ENCODE measurements at regions of chr17 and their contacts with region 1.

Region 1: DNA sequence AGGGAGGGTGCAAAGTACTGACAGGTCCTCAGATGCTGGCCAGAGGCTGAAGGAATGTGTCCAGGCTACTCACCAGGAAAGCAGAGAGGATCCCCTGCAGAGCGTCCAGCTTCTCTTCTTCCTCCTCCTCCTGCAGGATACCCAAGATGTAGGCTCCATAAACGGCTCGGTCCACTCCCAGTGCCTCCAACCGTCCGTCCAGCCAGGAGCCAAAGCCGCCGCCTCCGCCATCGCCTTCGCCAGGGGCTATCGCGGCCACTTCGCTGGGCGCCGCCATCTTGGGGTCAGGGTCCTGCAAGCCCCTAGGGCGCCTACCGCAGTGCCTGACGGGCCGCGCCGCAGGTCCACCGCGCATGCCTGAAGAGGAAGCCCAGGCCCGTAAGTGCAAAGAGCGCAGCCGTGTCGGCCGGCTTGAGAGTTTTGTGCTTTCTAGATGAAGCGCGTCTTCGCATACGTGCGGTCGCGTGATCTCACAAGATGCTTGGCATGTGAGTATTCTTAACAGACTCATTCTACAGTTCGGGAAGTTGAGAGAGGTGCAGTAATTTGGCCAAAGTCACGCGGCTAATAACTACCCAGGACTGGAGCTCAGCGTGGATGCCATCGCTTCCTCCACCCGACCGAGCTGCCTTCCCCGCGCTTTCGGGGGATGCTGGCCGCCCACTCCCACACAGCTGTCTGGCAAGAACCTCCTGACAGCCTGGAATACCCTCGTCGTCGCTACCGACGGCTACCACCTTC is at the start of gene CCDC43:
- DNase-seq: peak; percentile 96 to 97
- ATAC-seq: peak; percentile 96 to 99
- H3K4me3 ChIP-seq: peak within 1 kb of the TSS; percentile 67
- H3K27ac ChIP-seq: peak within 1 kb of the TSS; percentile 80 to 92
- H3K4me1 ChIP-seq: peaks cover 21% of the 10 kb centered on the region
- CTCF ChIP-seq: no peak
- EP300 ChIP-seq: no peak
- POLR2A ChIP-seq: peak; percentile 98
- RAD21 ChIP-seq: no peak; a peak in 1 of 5 replicates
- polyA plus RNA-seq, gene CCDC43: 24.1 and 34.3 TPM in 2 replicates

Region 2: DNA sequence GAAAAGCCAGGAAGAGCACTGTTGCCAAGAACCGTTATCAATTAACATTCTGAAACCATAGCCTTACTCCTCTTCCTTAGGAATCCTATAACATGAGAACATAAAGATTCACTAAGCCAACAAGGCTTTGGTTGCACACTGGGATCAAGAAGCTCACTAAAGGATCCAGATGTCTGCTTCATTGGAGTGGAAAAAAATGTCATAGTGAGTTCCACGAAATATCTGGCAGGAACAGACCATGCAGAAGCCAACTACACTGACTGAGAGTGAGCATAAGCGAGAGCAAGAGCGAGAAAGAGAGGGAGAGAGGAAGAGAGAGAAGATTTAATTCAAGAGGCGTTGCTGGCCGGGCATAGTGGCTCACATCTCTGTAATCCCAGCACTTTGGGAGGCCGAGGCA is 46.8 kb before region 1 on chr17:
- CTCF ChIA-PET with region 1: no interaction called
- POLR2A ChIA-PET with region 1: no interaction called
- DNase-seq: no peak
- ATAC-seq: no peak
- H3K4me3 ChIP-seq: no peak overlapping the region
- H3K27ac ChIP-seq: no peak overlapping the region
- H3K4me1 ChIP-seq: no peaks in the 10 kb centered on the region
- CTCF ChIP-seq: no peak
- EP300 ChIP-seq: no peak
- POLR2A ChIP-seq: no peak
- RAD21 ChIP-seq: no peak

Region 3: GRCh38 chr17:44672479-44673093 is 17.1 kb before region 1 on chr17:
- CTCF ChIA-PET with region 1: interaction called, 24 read pairs
- POLR2A ChIA-PET with region 1: interaction called, 5 read pairs
- DNase-seq: peak; percentile 42 to 60
- ATAC-seq: peak; percentile 66 to 70; a peak in 3 of 6 replicates
- H3K4me3 ChIP-seq: no peak overlapping the region
- H3K27ac ChIP-seq: no peak overlapping the region
- H3K4me1 ChIP-seq: no peaks in the 10 kb centered on the region
- CTCF ChIP-seq: peak; percentile 74
- EP300 ChIP-seq: no peak
- POLR2A ChIP-seq: no peak
- RAD21 ChIP-seq: peak; percentile 61 to 76

Region 4: DNA sequence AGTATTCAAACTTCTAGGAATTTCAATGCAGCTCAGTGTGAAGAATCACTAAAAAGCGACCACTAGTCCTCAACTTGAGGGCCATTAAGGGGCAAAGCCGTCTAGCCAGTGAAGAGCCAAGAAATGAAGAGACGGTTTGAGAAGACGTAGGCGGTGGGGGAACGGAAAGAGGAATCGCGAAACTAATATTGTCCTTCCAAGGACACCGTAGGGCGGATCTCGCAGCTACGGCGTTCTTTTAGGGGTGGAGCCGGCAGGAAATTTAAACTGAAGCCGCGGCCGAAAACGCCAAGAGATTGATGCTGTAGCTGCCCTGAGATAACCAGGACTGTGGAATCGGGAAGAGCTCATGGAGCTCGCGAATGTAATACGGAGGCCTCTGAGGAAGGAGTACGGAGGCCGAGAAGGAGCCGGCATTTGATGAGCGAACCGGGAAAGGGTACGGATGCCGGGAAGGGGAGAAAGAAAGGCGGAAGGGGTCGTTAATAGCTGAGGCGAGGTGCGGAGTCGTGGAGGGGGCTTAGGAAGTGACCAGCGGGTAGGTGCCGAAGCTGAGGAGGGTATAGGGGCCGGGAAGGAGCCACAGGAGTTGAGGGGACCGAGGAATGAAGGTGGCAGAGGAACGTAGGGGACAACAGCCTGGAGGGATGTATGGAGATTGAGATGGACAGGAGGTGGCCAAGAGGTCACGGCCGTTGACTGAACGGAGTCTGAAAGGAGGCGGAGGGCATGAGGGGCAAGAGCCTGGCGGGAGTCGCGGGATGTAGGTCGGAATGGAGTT is 18.9 kb after region 1 on chr17 and contains the start of gene DBF4B:
- CTCF ChIA-PET with region 1: interaction called, 4 read pairs
- POLR2A ChIA-PET with region 1: interaction called, 13 read pairs
- DNase-seq: peak; percentile 95 to 99
- ATAC-seq: peak; percentile 86 to 91
- H3K4me3 ChIP-seq: peak within 1 kb of the TSS; percentile 86
- H3K27ac ChIP-seq: peak within 1 kb of the TSS; percentile 71 to 85
- H3K4me1 ChIP-seq: peaks cover 15% of the 10 kb centered on the region
- CTCF ChIP-seq: no peak
- EP300 ChIP-seq: no peak
- POLR2A ChIP-seq: peak; percentile 57
- RAD21 ChIP-seq: no peak
- polyA plus RNA-seq, gene DBF4B: 16.5 and 16.9 TPM in 2 replicates